ENCODE measurements at regions of chr22 and their contacts with region 1.

Region 1: DNA sequence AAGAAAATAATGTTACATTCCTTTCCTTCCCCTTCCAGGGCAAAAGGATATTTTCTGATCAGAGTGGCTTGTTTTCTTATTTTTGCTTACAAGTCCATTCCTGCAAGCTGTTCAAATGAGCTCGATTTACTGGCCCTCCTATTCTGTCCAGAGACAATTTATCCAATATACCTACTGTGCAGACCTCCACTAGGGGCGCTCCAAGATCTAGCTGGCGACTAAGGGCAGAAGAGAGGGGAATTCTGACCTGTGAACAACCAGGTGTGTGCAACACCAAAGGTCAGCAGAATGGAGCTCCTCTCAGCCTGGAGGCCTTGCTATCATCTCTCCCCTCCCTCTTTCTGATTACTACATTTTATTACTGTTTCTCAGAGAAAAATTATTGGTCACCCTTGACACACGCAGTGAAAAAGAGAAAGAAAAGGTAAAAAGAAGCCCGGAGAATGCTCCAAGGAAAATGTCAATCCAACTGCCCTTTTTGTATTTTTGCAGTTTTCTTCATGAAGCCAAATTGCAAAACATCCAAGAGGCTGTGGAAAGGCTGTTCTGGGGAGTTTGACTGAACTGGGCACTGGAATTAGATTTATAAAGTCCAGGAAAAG is 3.2 kb downstream of the SEZ6L start:
- DNase-seq: peak; percentile 24
- ATAC-seq: peak; percentile 87
- H3K4me3 ChIP-seq: no peak overlapping the region
- H3K27ac ChIP-seq: no peak overlapping the region
- H3K4me1 ChIP-seq: no peaks in the 10 kb centered on the region
- H3K27me3 ChIP-seq: peaks cover 24% of the 10 kb centered on the region; the same call in 1 of the 2 replicates
- CTCF ChIP-seq: peak; percentile 23 to 83 (median 82); a peak in 5 of 6 replicates
- POLR2A ChIP-seq: no peak
- RAD21 ChIP-seq: peak; percentile 20; the same call in 1 of the 2 replicates

Region 2: GRCh38 chr22:26304730-26305129 is 132.2 kb after region 1 on chr22:
- CTCF ChIA-PET with region 1: no interaction called
- POLR2A ChIA-PET with region 1: no interaction called
- RAD21 ChIA-PET with region 1: no interaction called
- intact Hi-C with region 1: loop called (anchors 5 kb)
- DNase-seq: no peak
- ATAC-seq: no peak
- H3K4me3 ChIP-seq: no peak overlapping the region
- H3K27ac ChIP-seq: no peak overlapping the region
- H3K4me1 ChIP-seq: no peaks in the 10 kb centered on the region
- H3K27me3 ChIP-seq: peaks cover 45% of the 10 kb centered on the region
- CTCF ChIP-seq: no peak
- POLR2A ChIP-seq: no peak
- RAD21 ChIP-seq: no peak

Region 3: GRCh38 chr22:26321469-26321913 is 149.0 kb after region 1 on chr22:
- CTCF ChIA-PET with region 1: interaction called, 13 read pairs
- POLR2A ChIA-PET with region 1: no interaction called
- RAD21 ChIA-PET with region 1: no interaction called
- intact Hi-C with region 1: no loop called
- DNase-seq: no peak
- ATAC-seq: no peak
- H3K4me3 ChIP-seq: no peak overlapping the region
- H3K27ac ChIP-seq: no peak overlapping the region
- H3K4me1 ChIP-seq: peaks cover 0 to 19% of the 10 kb centered on the region in 2 experiments; a peak in 1 of 4 replicates
- H3K27me3 ChIP-seq: peaks cover 30% of the 10 kb centered on the region
- CTCF ChIP-seq: no peak
- POLR2A ChIP-seq: no peak
- RAD21 ChIP-seq: no peak

Region 4: DNA sequence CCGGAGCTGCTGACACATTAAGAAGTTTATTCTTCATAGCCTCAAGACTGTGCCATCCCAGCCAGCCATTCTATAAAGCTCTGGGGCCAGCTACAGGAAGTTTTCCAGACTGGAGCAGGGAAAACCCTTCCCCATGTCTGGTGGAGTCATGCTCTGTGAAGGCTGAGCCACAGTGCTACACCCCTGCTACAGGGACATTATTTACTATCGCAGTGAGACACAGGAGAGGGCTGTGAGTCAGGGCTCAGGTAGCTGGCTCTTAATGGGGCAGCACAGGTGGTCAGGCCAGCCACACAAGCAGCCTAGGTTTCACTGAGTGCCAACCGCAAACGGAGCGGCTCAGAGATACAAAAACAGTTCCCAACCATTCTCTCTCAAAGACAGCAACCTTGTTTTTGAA is 299.0 kb after region 1 on chr22:
- CTCF ChIA-PET with region 1: no interaction called
- POLR2A ChIA-PET with region 1: no interaction called
- RAD21 ChIA-PET with region 1: no interaction called
- intact Hi-C with region 1: no loop called
- DNase-seq: peak; percentile 47
- ATAC-seq: peak; percentile 97
- H3K4me3 ChIP-seq: no peak overlapping the region
- H3K27ac ChIP-seq: peak overlapping the region; percentile 1; the same call in 1 of the 2 replicates
- H3K4me1 ChIP-seq: peaks cover 0 to 18% of the 10 kb centered on the region in 2 experiments; a peak in 2 of 4 replicates
- H3K27me3 ChIP-seq: no peaks in the 10 kb centered on the region
- CTCF ChIP-seq: no peak
- POLR2A ChIP-seq: no peak
- RAD21 ChIP-seq: no peak